ENCODE measurements at regions of chr12 and their contacts with region 1.

Region 1: GRCh38 chr12:109844983-109845823 is 12.0 kb upstream of the TRPV4 start:
- DNase-seq: peak; percentile 75
- ATAC-seq: peak; percentile 90
- H3K4me3 ChIP-seq: peak overlapping the region; percentile 35 to 59 (median 42)
- H3K27ac ChIP-seq: no peak overlapping the region
- H3K4me1 ChIP-seq: peaks cover 51% of the 10 kb centered on the region
- H3K27me3 ChIP-seq: no peaks in the 10 kb centered on the region
- CTCF ChIP-seq: peak; percentile 100
- EP300 ChIP-seq: peak in 1 of 2 experiments; percentile 15; a peak in 1 of 4 replicates
- POLR2A ChIP-seq: no peak
- RAD21 ChIP-seq: peak; percentile 96

Region 2: GRCh38 chr12:109563291-109564284 is 281.6 kb before region 1 on chr12:
- CTCF ChIA-PET with region 1: no interaction called
- POLR2A ChIA-PET with region 1: no interaction called
- in situ Hi-C with region 1: no loop called
- intact Hi-C with region 1: no loop called
- DNase-seq: no peak
- ATAC-seq: no peak
- H3K4me3 ChIP-seq: no peak overlapping the region
- H3K27ac ChIP-seq: no peak overlapping the region
- H3K4me1 ChIP-seq: peaks cover 12% of the 10 kb centered on the region
- H3K27me3 ChIP-seq: no peaks in the 10 kb centered on the region
- CTCF ChIP-seq: no peak
- EP300 ChIP-seq: no peak
- POLR2A ChIP-seq: no peak
- RAD21 ChIP-seq: no peak

Region 3: DNA sequence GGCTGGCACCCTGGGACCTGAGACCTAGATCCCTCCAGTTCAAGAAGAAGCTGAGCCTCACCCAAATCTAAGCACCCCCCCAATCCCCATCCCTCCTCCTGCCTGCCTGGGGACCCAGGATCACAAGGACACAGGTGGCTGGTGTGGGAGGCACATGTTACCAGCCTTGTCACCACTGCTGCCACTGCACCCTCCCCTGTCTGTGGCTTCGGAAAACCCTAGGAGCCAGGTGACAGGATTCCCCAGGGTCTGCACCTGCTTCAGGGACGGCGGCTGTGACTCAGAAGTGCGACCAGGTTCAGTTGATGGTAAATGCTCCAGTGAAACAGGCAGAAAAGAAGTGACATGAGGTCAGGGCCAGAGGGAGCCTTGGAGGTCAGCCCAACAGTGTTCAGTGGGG is 194.4 kb before region 1 on chr12:
- CTCF ChIA-PET with region 1: no interaction called
- POLR2A ChIA-PET with region 1: no interaction called
- in situ Hi-C with region 1: no loop called
- intact Hi-C with region 1: no loop called
- DNase-seq: no peak
- ATAC-seq: no peak
- H3K4me3 ChIP-seq: no peak overlapping the region
- H3K27ac ChIP-seq: no peak overlapping the region
- H3K4me1 ChIP-seq: peaks cover 38% of the 10 kb centered on the region
- H3K27me3 ChIP-seq: peaks cover 6 to 36% of the 10 kb centered on the region in 2 experiments; a peak in 4 of 5 replicates
- CTCF ChIP-seq: no peak
- EP300 ChIP-seq: no peak
- POLR2A ChIP-seq: no peak
- RAD21 ChIP-seq: no peak

Region 4: DNA sequence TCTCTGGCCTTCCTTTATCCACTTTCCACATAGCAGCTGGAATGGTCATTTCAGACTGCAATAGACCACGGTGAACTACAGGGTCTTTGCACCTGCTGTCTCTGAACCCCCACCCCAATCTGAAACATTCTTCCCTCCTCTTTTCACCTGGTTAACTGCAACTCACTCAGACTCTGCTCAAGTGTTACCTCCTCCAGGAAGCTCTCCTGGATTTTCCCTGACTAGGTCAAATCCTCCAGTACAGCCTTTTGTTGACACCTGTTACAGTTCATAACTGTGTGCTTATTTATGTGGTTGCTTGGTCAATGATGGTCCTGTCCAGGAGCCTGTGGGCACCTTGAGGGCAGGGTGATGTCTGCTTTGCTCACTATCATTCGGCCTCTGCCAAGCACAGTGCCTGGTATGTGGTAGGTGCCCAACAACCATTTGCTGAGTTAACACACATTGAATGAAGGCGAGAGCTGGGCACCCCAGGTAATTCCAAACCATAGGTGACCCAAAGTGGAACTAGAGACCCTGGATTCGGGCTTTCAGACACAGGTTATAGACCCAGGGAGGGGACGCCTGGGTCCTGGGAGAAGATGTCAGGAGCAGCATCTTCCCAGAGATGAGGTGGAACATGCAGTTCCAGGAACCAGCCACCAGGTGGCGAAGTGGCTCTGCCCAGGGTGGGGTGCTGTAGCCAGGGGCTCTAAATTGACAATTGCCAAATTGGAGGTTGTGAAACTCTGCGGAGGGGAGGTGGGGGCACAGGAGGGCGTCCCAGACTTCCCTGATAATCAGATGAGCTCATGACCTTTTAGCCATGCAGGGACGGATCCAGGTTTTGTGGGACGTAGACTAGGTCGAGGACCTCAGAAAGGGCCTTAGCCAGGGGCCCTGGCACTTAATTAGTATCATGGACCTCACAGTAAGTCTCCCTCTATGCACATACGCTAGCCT is 40.1 kb before region 1 on chr12:
- CTCF ChIA-PET with region 1: interaction called, 61 read pairs
- POLR2A ChIA-PET with region 1: no interaction called
- in situ Hi-C with region 1: loop called (anchors 5 kb)
- intact Hi-C with region 1: loop called (anchors 1 kb)
- DNase-seq: peak; percentile 45
- ATAC-seq: peak; percentile 84
- H3K4me3 ChIP-seq: no peak overlapping the region; a peak in 1 of 6 replicates
- H3K27ac ChIP-seq: no peak overlapping the region
- H3K4me1 ChIP-seq: peaks cover 5% of the 10 kb centered on the region; the same call in 1 of the 2 replicates
- H3K27me3 ChIP-seq: no peaks in the 10 kb centered on the region
- CTCF ChIP-seq: peak; percentile 94
- EP300 ChIP-seq: no peak
- POLR2A ChIP-seq: no peak
- RAD21 ChIP-seq: peak; percentile 91

Region 5: DNA sequence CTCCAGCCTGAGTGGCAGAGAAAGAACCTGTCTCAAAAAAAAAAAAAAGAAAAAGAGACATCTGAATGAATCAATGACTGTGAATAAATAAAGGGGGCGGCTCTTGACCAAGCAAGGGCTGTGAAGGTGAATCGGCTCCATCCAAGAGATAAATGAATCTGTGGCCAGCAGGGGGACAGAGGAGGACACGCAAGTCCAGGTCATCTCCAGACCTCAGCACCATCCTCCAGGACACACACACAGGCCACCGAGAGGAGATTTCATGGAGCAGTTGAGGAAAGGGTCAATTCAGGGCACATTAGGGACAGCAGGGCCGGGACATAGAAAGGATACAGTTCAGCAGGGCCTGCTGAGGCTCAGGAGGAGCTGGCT is 33.6 kb before region 1 on chr12:
- CTCF ChIA-PET with region 1: interaction called, 10 read pairs
- POLR2A ChIA-PET with region 1: no interaction called
- in situ Hi-C with region 1: no loop called
- intact Hi-C with region 1: no loop called
- DNase-seq: peak; percentile 36
- ATAC-seq: peak; percentile 85
- H3K4me3 ChIP-seq: no peak overlapping the region
- H3K27ac ChIP-seq: no peak overlapping the region
- H3K4me1 ChIP-seq: peaks cover 17% of the 10 kb centered on the region
- H3K27me3 ChIP-seq: no peaks in the 10 kb centered on the region
- CTCF ChIP-seq: peak; percentile 43
- EP300 ChIP-seq: no peak
- POLR2A ChIP-seq: no peak
- RAD21 ChIP-seq: no peak

Region 6: GRCh38 chr12:109880016-109880931 is 35.1 kb after region 1 on chr12 and contains the start of gene GLTP:
- CTCF ChIA-PET with region 1: no interaction called
- POLR2A ChIA-PET with region 1: no interaction called
- in situ Hi-C with region 1: loop called (anchors 5 kb)
- intact Hi-C with region 1: no loop called
- DNase-seq: peak; percentile 58
- ATAC-seq: peak; percentile 93
- H3K4me3 ChIP-seq: peak within 1 kb of the TSS; percentile 73 to 92 (median 80)
- H3K27ac ChIP-seq: no peak within 1 kb of the TSS
- H3K4me1 ChIP-seq: peaks cover 58% of the 10 kb centered on the region
- H3K27me3 ChIP-seq: peaks cover 0 to 9% of the 10 kb centered on the region in 2 experiments; a peak in 2 of 5 replicates
- CTCF ChIP-seq: peak; percentile 59; the same call in 1 of the 2 replicates
- EP300 ChIP-seq: no peak
- POLR2A ChIP-seq: peak in 1 of 2 experiments; percentile 32; a peak in 1 of 4 replicates
- RAD21 ChIP-seq: peak; percentile 100
- total RNA-seq, gene GLTP: 12.9 and 13.0 TPM in 2 replicates

Region 7: GRCh38 chr12:109927622-109928021 is 82.4 kb after region 1 on chr12:
- CTCF ChIA-PET with region 1: no interaction called
- POLR2A ChIA-PET with region 1: no interaction called
- in situ Hi-C with region 1: no loop called
- intact Hi-C with region 1: loop called (anchors 5 kb)
- DNase-seq: peak; percentile 44
- ATAC-seq: peak; percentile 78
- H3K4me3 ChIP-seq: no peak overlapping the region
- H3K27ac ChIP-seq: no peak overlapping the region
- H3K4me1 ChIP-seq: peaks cover 25% of the 10 kb centered on the region
- H3K27me3 ChIP-seq: no peaks in the 10 kb centered on the region
- CTCF ChIP-seq: peak; percentile 78
- EP300 ChIP-seq: no peak
- POLR2A ChIP-seq: no peak
- RAD21 ChIP-seq: 0 out of 2 replicates have a peak, but pooled peaks have one; percentile 21